ENCODE measurements at regions of chr2 and their contacts with region 1.

Region 1: DNA sequence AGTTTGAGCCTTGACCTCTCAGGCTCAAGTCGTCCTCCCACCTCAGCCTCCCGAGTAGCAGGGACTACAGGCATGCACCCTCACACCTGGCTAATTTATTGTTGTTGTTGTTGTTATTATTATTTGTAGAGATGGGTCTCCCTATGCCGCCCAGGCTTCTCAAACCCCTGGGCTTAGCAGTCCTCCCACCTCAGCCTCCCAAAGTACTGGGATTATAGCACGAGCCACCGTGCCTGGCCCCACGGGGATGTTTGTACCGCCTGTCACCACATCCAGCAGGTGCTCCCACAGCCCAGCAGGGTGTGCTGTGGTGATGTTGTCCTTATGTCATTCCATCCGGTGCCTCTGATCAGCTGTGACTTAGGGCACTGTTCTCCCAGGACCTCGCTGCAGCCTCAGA is 182.3 kb downstream of the INO80D start:
- DNase-seq: peak; percentile 32
- ATAC-seq: peak; percentile 51
- H3K4me3 Mint-ChIP-seq: no peak overlapping the region
- H3K27ac Mint-ChIP-seq: no peak overlapping the region
- H3K4me1 Mint-ChIP-seq: no peaks in the 10 kb centered on the region
- H3K27me3 Mint-ChIP-seq: peaks cover 8% of the 10 kb centered on the region

Region 2: DNA sequence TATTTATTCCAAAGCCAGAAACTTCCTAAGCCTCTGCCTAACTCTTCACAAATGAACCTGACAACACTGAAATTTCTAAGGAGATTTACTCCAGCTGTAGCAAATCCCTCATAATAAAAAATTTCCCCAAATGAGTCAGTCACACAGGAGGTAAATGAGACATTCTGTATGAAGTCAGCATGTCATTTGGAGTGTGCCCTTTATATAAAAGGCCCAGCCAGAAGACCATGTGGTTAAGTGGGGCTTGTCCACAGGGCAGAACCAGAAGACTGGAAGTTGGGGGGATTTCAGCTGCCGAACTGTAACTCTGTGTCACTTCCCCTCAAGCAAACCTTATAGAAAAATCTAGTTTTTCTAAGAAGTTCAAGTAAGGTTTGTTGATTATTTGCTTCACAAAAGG is 191.1 kb before region 1 on chr2:
- CTCF ChIA-PET with region 1: no interaction called
- POLR2A ChIA-PET with region 1: no interaction called
- intact Hi-C with region 1: no loop called
- DNase-seq: no peak
- ATAC-seq: no peak
- H3K4me3 Mint-ChIP-seq: no peak overlapping the region
- H3K27ac Mint-ChIP-seq: no peak overlapping the region
- H3K4me1 Mint-ChIP-seq: peaks cover 13% of the 10 kb centered on the region
- H3K27me3 Mint-ChIP-seq: no peaks in the 10 kb centered on the region

Region 3: DNA sequence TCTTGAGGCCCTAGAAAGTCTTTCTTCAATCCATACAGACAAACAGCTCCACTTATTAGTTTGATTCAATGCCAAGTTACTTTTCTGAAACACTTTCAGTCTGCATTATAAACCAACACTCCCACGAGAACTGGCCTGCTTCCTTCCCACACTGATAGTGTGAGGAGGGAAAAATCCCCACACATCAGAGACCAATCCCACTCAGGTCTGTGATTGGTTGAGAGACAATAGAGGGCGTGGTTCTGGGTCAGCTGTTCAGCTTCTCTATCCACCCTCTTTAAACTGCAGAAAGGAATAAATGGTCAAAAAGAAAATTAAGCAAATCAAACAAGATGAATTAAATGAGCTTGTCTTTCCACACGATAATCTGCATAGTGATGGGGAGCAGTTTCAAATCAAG is 68.8 kb before region 1 on chr2:
- CTCF ChIA-PET with region 1: no interaction called
- POLR2A ChIA-PET with region 1: no interaction called
- intact Hi-C with region 1: no loop called
- DNase-seq: no peak
- ATAC-seq: no peak
- H3K4me3 Mint-ChIP-seq: no peak overlapping the region
- H3K27ac Mint-ChIP-seq: no peak overlapping the region
- H3K4me1 Mint-ChIP-seq: no peaks in the 10 kb centered on the region
- H3K27me3 Mint-ChIP-seq: peaks cover 5% of the 10 kb centered on the region

Region 4: DNA sequence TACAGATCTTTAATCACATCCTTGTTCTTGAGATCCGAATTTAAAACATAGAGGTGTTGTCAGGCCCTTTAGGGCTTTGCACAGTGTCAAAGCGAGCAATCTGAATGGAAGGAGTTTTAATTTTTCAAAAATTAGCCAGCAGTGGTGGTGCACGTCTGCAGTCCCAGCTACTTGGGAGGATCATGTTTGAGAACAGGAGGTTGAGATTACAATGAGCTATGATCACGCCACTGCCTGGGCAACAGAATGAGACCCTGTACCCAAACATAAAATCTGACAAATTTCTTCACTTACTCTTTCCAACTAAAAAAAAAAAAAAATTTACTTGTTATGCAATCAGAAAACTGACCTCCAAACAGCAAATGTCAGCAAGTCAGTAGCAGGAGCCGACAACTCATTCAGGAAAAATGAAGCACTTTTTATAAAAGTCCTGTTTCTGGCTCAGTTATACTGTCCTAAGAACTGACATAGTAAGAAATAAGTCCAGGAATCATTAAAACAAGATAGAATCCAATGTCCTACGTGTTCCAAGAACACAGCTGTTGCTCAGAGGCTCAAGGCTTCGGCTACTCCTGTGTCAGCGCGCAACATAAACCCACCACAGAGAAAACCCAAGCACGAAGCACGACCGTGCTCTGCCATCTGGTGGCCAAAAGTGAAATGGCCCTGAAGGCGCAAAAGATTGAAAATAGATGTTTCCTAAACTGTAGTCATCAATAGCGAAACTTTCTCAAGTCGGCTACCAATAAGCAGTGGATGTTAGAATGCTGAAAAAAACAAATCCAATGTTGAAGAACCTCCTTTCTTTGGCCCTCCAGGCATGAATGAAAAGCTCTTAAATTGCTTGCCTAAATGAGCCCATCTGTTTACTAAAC is 44.2 kb after region 1 on chr2:
- CTCF ChIA-PET with region 1: no interaction called
- POLR2A ChIA-PET with region 1: no interaction called
- intact Hi-C with region 1: loop called in 1 of 2 experiments (anchors 2 kb)
- DNase-seq: peak; percentile 76
- ATAC-seq: peak; percentile 77
- H3K4me3 Mint-ChIP-seq: no peak overlapping the region
- H3K27ac Mint-ChIP-seq: no peak overlapping the region
- H3K4me1 Mint-ChIP-seq: peaks cover 2% of the 10 kb centered on the region
- H3K27me3 Mint-ChIP-seq: peaks cover 10% of the 10 kb centered on the region